ENCODE measurements at regions of chr19 and their contacts with region 1.

Region 1: DNA sequence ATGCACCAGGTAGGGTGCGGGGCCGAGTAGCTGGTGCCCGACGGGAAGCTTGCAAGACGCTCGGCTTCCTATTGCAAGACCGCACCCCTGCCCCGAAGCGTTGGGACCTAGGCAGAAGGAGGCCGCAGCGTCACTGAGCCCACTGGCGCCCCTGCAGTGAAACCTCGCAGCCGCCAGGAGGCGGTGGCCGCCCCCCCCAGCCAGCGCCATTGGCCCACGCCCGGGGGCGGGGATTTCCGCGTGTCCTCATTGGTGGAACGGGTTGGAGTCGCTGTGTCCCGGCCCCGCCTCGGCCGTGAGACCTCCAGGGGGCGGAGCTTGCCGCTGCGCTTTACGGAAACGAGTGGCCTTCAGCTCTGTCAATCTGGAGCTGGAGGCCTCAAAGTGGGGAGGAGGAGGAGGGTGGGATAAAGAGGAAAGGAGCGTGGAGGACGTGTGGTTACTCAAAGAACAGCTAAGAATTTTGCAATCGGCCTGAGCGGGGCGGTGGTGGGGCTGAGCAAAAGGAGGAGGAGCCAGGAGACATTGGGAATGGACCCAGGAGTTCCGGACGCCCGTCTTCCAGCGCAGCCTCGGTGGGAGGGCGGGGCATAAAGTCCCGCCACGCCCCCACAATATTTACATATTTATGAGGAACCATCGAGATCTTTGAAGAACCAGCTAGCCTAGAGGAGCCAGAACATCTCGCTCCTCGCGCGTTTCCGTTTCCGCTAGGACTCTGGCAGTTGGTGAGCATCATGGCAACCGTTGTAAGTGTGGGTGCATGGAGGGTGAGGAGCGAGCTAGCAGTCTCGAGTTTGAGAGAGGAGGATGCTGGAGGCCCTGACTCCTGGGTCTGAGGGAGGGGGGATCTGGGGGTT is at the starts of genes GYS1 and RUVBL2:
- DNase-seq: peak; percentile 100
- H3K4me3 ChIP-seq: peak within 1 kb of the TSS; percentile 81 to 89 (median 86)
- H3K27ac ChIP-seq: peak within 1 kb of the TSS; percentile 86
- H3K4me1 ChIP-seq: peaks cover 28% of the 10 kb centered on the region
- H3K27me3 ChIP-seq: no peaks in the 10 kb centered on the region
- CTCF ChIP-seq: peak; percentile 83 to 92
- total RNA-seq, gene GYS1: 40.0 to 79.8 TPM
- total RNA-seq, gene RUVBL2: 108 to 148 TPM

Region 2: GRCh38 chr19:48913114-48913889 is 80.1 kb before region 1 on chr19:
- CTCF ChIA-PET with region 1: no interaction called
- dilution Hi-C with region 1: no loop called
- in situ Hi-C with region 1: no loop called
- intact Hi-C with region 1: no loop called
- DNase-seq: no peak
- H3K4me3 ChIP-seq: no peak overlapping the region
- H3K27ac ChIP-seq: no peak overlapping the region
- H3K4me1 ChIP-seq: no peaks in the 10 kb centered on the region
- H3K27me3 ChIP-seq: no peaks in the 10 kb centered on the region
- CTCF ChIP-seq: no peak

Region 3: DNA sequence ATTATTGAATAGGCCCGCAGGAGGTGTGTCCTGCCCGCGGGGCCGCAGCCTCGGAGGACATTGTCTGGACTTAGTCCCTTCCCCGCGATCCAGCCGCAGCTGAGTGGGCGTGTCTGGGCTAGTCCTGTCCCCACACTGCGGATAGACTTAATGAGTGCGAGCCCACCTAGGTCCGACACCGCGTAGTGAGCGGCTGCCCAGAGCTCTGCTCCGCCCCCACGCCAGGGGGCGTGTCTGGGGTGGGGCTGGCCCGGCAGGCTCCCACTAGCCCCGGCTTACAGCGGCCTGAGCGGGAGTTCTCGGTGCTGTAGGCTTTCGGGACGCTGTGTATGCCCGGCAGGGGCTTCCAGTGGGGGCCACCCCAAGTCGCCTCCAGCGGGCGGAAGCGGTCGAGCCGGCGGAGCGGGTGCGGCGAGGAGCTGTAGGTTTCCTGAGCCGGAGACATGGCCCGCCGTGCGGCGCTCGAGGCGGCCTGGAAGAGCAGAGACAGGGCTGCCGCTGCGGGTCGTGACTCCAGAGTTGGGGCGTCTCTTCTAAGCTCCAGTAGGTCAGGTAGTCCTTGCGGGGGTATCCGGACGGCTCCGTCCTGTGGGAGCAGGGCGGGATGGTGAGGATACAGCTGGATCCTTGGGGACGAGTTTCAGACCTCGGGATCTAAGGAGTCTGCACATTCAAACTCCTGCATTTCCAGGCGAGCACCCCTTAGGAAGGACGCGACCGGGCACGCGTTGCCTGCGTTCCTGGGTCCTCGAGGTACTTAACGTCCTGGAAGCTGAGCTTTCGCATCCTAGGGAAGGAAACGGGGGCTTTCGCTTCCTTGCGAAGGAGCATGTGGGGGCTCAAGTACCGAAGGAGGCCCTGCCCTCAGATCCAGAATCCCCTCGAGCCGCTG is 62.9 kb after region 1 on chr19:
- CTCF ChIA-PET with region 1: interaction called, 4 read pairs
- dilution Hi-C with region 1: loop called (anchors 5 kb)
- in situ Hi-C with region 1: no loop called
- intact Hi-C with region 1: loop called (anchors 5 kb)
- DNase-seq: peak; percentile 69
- H3K4me3 ChIP-seq: peak overlapping the region; percentile 57 to 83 (median 69)
- H3K27ac ChIP-seq: peak overlapping the region; percentile 52
- H3K4me1 ChIP-seq: peaks cover 20% of the 10 kb centered on the region
- H3K27me3 ChIP-seq: no peaks in the 10 kb centered on the region
- CTCF ChIP-seq: peak in 1 of 2 donors; percentile 37

Region 4: DNA sequence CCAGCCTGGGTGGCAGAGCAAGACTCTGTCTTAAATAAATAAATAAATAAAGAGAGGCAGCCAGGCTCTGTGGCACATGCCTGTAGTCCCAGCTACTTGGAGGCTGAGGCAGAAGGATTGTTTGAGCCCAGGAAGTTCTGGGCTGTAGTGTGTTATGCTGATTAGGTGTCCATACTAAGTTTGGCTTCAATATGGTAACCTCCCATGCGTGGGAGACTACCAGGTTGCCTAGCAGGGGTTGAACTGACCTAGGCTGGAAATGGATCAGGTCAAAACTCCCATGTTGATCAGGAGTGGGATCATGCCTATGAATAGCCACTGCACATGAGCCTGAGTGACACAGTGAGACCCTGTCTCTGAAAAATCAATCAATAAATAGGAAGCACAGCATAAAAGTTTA is 87.9 kb after region 1 on chr19:
- CTCF ChIA-PET with region 1: no interaction called
- dilution Hi-C with region 1: no loop called
- in situ Hi-C with region 1: no loop called
- intact Hi-C with region 1: no loop called
- DNase-seq: no peak
- H3K4me3 ChIP-seq: no peak overlapping the region
- H3K27ac ChIP-seq: no peak overlapping the region
- H3K4me1 ChIP-seq: peaks cover 2% of the 10 kb centered on the region
- H3K27me3 ChIP-seq: no peaks in the 10 kb centered on the region
- CTCF ChIP-seq: no peak

Region 5: DNA sequence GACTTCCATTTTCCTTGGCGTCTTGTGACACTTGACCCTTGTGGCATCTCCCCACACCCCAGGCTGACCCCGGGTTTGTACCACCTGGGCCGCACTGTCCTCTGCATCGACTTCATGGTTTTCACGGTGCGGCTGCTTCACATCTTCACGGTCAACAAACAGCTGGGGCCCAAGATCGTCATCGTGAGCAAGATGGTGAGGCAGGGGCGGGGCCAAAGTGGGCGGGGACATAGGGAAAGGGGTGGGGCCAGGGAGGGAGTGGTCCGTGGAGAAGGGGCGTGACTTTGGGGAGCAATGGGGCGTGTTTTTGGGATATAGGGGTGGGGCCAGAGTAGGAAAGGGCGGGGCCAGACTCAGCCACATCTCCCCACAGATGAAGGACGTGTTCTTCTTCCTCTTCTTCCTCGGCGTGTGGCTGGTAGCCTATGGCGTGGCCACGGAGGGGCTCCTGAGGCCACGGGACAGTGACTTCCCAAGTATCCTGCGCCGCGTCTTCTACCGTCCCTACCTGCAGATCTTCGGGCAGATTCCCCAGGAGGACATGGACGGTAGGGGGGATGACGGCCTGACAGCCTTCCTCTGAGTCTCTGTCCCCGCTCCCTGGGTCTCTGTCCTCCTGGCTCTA is 206.9 kb after region 1 on chr19:
- CTCF ChIA-PET with region 1: no interaction called
- dilution Hi-C with region 1: no loop called
- in situ Hi-C with region 1: loop called in 1 of 2 experiments (anchors 10 kb)
- intact Hi-C with region 1: no loop called
- DNase-seq: no peak
- H3K4me3 ChIP-seq: no peak overlapping the region
- H3K27ac ChIP-seq: no peak overlapping the region
- H3K4me1 ChIP-seq: peaks cover 25% of the 10 kb centered on the region
- H3K27me3 ChIP-seq: no peaks in the 10 kb centered on the region
- CTCF ChIP-seq: no peak